Caco-2 (cell line): ENCODE measurements at regions of chr6 and their contacts with region 1.

Region 1: DNA sequence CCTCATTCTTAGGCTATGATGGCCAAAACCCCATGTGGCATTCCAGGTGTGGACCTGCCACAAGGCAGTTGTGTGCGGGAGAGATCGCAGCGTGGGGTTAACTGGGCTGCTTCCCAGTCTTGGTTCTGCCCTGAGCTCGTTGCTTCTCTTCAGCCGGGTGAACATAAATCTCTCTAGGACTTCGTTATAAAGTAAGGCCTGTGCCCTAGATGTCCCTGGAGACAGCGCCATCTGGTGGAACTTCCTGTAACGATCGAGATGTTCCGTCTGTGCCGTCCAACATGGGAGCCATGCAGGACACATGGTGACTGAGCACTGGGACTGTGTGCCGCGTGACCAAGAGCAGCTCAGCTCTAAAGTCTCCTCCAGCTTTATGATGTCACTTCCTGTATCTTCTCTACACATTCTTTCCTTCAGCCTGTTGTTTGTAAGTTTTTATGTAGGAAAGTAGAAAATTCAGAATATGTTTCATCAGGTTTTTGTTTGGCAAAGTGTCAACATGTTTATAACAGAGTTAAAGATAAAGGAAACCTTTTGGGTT is 26.8 kb upstream of the RPP40 start:
- DNase-seq: peak; percentile 74 to 81
- H3K4me3 ChIP-seq: no peak overlapping the region
- H3K4me3 Mint-ChIP-seq: no peak overlapping the region
- H3K27ac Mint-ChIP-seq: no peak overlapping the region
- H3K4me1 ChIP-seq: peaks cover 2% of the 10 kb centered on the region; the same call in 1 of the 2 replicates
- H3K4me1 Mint-ChIP-seq: peaks cover 6% of the 10 kb centered on the region
- H3K27me3 ChIP-seq: no peaks in the 10 kb centered on the region
- H3K27me3 Mint-ChIP-seq: no peaks in the 10 kb centered on the region
- CTCF ChIP-seq: peak; percentile 55 to 60

Region 2: DNA sequence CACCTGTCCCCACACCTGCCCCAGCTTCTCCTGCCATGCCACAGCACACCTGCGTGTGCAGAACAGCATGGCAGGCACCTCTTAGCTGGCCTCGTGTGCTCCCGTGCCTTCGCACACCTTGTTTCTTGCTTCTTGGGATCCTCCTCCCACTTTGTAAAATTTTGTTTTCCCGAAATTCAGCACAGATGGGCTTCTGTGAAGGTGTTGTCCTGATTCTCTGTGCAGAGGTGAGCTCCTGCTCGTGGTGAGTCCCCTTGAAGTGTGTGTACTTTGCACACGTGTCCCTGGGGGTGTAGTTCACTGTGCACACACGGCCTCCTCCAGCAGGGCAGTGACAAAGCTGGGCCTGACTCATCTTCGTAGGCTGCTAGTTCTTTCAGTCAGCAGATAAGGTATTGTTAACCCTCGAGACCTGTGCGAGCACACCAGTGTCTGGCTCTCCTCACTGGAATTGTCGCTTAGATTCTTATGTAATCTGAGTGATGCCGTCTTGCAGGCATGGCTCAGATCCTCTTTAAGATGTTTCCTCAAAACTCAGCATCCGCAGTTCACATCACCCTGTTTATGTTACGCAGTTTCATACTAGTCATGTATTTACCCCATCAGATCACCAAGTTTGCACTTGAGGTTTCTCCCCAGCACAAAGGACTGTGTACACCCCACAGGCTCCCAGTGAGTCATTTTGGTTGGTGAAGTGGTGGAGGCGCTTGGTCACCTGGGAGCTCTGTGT is 176.7 kb before region 1 on chr6:
- CTCF ChIA-PET with region 1: no interaction called
- POLR2A ChIA-PET with region 1: no interaction called
- intact Hi-C with region 1: no loop called
- DNase-seq: peak; percentile 39 to 69
- H3K4me3 ChIP-seq: peak overlapping the region; percentile 7; the same call in 1 of the 2 replicates
- H3K4me3 Mint-ChIP-seq: peak overlapping the region; percentile 55
- H3K27ac Mint-ChIP-seq: peak overlapping the region; percentile 56
- H3K4me1 ChIP-seq: peaks cover 21% of the 10 kb centered on the region
- H3K4me1 Mint-ChIP-seq: peaks cover 27% of the 10 kb centered on the region
- H3K27me3 ChIP-seq: no peaks in the 10 kb centered on the region
- H3K27me3 Mint-ChIP-seq: no peaks in the 10 kb centered on the region
- CTCF ChIP-seq: no peak

Region 3: GRCh38 chr6:5003604-5004372 is 26.9 kb before region 1 on chr6 and contains the start of gene RPP40:
- CTCF ChIA-PET with region 1: interaction called, 7 read pairs
- POLR2A ChIA-PET with region 1: interaction called, 3 read pairs
- intact Hi-C with region 1: loop called (anchors 1 kb)
- DNase-seq: peak; percentile 98
- H3K4me3 ChIP-seq: peak within 1 kb of the TSS; percentile 53
- H3K4me3 Mint-ChIP-seq: peak within 1 kb of the TSS; percentile 93
- H3K27ac Mint-ChIP-seq: peak within 1 kb of the TSS; percentile 89
- H3K4me1 ChIP-seq: no peaks in the 10 kb centered on the region
- H3K4me1 Mint-ChIP-seq: no peaks in the 10 kb centered on the region
- H3K27me3 ChIP-seq: no peaks in the 10 kb centered on the region
- H3K27me3 Mint-ChIP-seq: no peaks in the 10 kb centered on the region
- CTCF ChIP-seq: peak; percentile 76 to 89
- total RNA-seq, gene RPP40: 11.6 and 13.1 TPM in 2 replicates